CD14-positive monocyte (primary cell): ENCODE measurements at regions of chr20 and their contacts with region 1.

Region 1: DNA sequence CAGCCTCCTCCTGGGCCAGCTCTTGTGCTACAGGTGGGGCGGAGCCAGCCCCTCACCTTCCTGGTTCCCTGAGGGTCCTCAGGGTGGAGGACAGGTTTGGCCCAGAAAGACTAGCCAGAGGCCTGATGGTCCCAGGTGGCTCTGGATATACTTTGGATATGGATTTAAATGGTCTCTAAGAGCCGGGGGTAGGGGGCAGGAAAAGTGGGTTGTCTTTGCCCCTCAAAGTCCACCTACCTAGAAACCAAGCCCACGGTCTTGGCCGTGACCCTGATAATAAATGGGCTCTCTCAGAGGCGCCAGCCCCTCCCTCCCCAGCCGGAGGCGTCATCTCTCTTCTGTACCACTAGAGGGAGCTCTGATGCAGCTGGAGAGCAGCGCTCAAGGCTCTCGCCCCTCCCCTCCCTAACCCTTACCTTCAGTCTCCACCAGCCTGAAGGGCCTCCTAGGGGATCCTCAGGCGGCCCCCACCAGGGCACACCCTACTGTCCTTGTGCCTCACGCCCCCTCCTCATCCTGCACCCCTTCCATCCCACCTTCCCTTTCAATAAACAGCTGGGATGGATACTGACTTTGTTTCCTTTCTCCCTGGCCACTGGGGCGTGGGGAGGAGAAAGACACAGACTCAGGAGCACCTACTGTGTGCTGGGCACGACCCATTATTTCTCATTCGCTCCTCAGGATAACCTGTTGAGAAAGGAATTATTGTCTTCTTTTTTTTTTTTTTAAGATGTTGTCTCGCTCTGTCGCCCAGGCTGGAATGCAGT is 7.6 kb downstream of the NRSN2 start:
- DNase-seq: peak; percentile 80 to 83 (median 81)
- H3K4me3 ChIP-seq: no peak overlapping the region
- H3K4me3 Mint-ChIP-seq: no peak overlapping the region
- H3K27ac ChIP-seq: no peak overlapping the region
- H3K27ac Mint-ChIP-seq: peak overlapping the region in 1 of 7 donors; percentile 18
- H3K4me1 ChIP-seq: no peaks in the 10 kb centered on the region
- H3K4me1 Mint-ChIP-seq: peaks cover 3% of the 10 kb centered on the region
- H3K27me3 ChIP-seq: no peaks in the 10 kb centered on the region
- H3K27me3 Mint-ChIP-seq: peaks cover 0 to 7% (median 2%) of the 10 kb centered on the region in 3 donors
- CTCF ChIP-seq: peak; percentile 92

Region 2: GRCh38 chr20:478949-479429 is 124.5 kb after region 1 on chr20:
- intact Hi-C with region 1: loop called (anchors 1 kb)
- DNase-seq: peak; percentile 32 to 62 (median 47)
- H3K4me3 ChIP-seq: no peak overlapping the region
- H3K4me3 Mint-ChIP-seq: no peak overlapping the region
- H3K27ac ChIP-seq: no peak overlapping the region
- H3K27ac Mint-ChIP-seq: no peak overlapping the region
- H3K4me1 ChIP-seq: no peaks in the 10 kb centered on the region
- H3K4me1 Mint-ChIP-seq: no peaks in the 10 kb centered on the region
- H3K27me3 ChIP-seq: no peaks in the 10 kb centered on the region
- H3K27me3 Mint-ChIP-seq: peaks cover 0 to 3% (median 0%) of the 10 kb centered on the region in 3 donors
- CTCF ChIP-seq: peak; percentile 73